ENCODE measurements at regions of chr21 and their contacts with region 1.

Region 1: GRCh38 chr21:43667191-43667904 is 8.0 kb downstream of the RRP1B start:
- DNase-seq: no peak
- ATAC-seq: no peak
- H3K4me3 ChIP-seq: no peak overlapping the region
- H3K27ac ChIP-seq: no peak overlapping the region
- H3K4me1 ChIP-seq: no peaks in the 10 kb centered on the region
- H3K27me3 ChIP-seq: no peaks in the 10 kb centered on the region
- CTCF ChIP-seq: no peak
- POLR2A ChIP-seq: no peak

Region 2: GRCh38 chr21:43718872-43719747 is 51.8 kb after region 1 on chr21 and contains the start of gene PDXK:
- intact Hi-C with region 1: loop called in 1 of 2 experiments (anchors 10 kb)
- DNase-seq: peak; percentile 93 to 94 (median 94)
- ATAC-seq: peak; percentile 87 to 93 (median 90)
- H3K4me3 ChIP-seq: peak within 1 kb of the TSS; percentile 90 to 97 (median 95)
- H3K27ac ChIP-seq: peak within 1 kb of the TSS; percentile 87 to 94 (median 94)
- H3K4me1 ChIP-seq: peaks cover 0 to 17% (median 7%) of the 10 kb centered on the region in 4 donors
- H3K27me3 ChIP-seq: no peaks in the 10 kb centered on the region
- CTCF ChIP-seq: peak in 2 of 4 donors; percentile 5 to 14
- POLR2A ChIP-seq: peak; percentile 96
- total RNA-seq, gene PDXK: 52.9 to 87.5 (median 58.9) TPM

Region 3: DNA sequence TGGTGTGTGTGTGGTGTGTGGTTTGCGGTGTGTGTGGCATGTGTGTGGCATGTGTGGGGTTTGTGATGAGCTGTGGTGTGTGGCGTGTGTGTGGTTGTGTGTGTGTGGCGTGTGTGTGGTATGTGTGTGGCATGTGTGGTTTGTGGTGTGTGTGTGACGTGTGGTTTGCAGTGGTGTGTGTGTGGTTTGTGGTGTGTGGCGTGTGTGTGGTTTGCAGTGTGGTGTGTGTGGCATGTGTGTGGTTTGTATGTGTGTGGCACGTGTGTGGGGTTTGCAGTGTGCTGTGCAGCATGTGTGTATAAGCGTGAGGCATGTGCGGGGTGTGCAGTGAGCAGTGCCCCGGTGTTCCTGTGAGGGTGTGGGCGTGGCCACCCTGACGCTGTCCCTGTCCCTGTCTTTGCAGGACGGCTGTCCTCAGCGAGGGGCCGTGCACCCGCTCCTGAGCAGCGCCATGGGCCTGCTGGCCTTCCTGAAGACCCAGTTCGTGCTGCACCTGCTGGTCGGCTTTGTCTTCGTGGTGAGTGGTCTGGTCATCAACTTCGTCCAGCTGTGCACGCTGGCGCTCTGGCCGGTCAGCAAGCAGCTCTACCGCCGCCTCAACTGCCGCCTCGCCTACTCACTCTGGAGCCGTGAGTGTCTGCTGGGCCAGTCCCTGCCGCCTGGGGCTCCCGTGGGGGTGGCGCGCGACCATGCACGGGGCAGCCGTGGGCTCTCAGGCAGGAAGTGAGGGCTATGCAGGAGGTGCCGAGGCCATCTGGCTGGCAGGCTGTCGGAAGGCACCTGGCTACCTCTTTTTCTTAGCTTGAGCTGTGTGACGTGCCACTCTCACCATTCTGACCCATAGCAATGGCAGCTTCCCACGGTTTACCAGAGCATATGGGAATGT is 292.1 kb after region 1 on chr21:
- intact Hi-C with region 1: no loop called
- DNase-seq: peak in 1 of 3 donors; percentile 36
- ATAC-seq: peak in 1 of 4 donors; percentile 3
- H3K4me3 ChIP-seq: no peak overlapping the region
- H3K27ac ChIP-seq: no peak overlapping the region
- H3K4me1 ChIP-seq: peaks cover 0 to 9% (median 4%) of the 10 kb centered on the region in 4 donors
- H3K27me3 ChIP-seq: no peaks in the 10 kb centered on the region
- CTCF ChIP-seq: no peak
- POLR2A ChIP-seq: no peak